ENCODE measurements at regions of chrX and their contacts with region 1.

Region 1: DNA sequence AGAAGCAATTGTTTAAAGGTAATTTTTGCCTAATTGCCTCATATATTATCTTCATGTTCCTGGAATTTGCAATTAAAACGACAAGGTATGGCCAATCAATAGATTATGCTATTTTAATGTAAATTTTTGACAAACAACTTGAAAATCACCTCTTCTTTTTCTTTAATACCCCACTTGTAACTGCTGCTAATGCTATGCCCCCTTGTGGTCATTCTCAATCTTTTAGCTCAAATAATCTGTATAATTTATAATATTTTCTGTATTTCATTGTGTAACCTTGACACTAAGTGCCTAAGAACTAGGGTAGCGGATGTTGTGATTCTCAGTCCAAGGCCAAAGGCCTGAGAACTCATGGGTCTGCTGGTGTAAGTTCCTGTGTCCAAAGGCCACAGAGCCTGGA is 831.7 kb upstream of the POU3F4 start:
- DNase-seq: no peak
- H3K4me3 ChIP-seq: no peak overlapping the region
- H3K27ac ChIP-seq: no peak overlapping the region
- H3K4me1 ChIP-seq: no peaks in the 10 kb centered on the region
- H3K27me3 ChIP-seq: no peaks in the 10 kb centered on the region
- CTCF ChIP-seq: peak; percentile 59
- EP300 ChIP-seq: no peak
- RAD21 ChIP-seq: peak; percentile 8; the same call in 1 of the 2 replicates

Region 2: GRCh38 chrX:82666355-82666754 is 10.0 kb before region 1 on chrX:
- CTCF ChIA-PET with region 1: interaction called, 12 read pairs
- POLR2A ChIA-PET with region 1: no interaction called
- DNase-seq: no peak
- H3K4me3 ChIP-seq: no peak overlapping the region
- H3K27ac ChIP-seq: no peak overlapping the region
- H3K4me1 ChIP-seq: no peaks in the 10 kb centered on the region
- H3K27me3 ChIP-seq: no peaks in the 10 kb centered on the region
- CTCF ChIP-seq: no peak
- EP300 ChIP-seq: no peak
- RAD21 ChIP-seq: no peak

Region 3: DNA sequence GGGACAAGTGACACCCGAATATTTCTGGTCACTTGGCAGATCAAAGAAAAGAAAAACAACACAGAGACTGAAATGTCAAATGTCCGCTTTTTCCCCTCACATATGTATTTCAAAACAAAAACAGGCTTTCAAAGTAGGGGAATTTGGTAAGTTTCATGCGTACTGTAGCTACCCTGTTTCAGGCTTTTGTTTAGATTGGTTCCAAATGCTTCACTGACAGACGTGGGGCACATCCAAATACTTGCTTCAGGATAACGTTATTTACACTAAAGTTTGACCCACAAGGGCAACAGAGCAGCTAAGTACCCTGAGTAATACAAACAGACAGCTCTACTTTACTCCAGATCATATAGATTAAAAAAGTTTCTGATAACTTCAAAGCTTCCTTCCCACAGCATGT is 27.2 kb after region 1 on chrX:
- CTCF ChIA-PET with region 1: no interaction called
- POLR2A ChIA-PET with region 1: no interaction called
- DNase-seq: no peak
- H3K4me3 ChIP-seq: no peak overlapping the region
- H3K27ac ChIP-seq: no peak overlapping the region
- H3K4me1 ChIP-seq: no peaks in the 10 kb centered on the region
- H3K27me3 ChIP-seq: no peaks in the 10 kb centered on the region
- CTCF ChIP-seq: no peak
- EP300 ChIP-seq: no peak
- RAD21 ChIP-seq: no peak

Measured in SK-N-SH (cell line).